ENCODE measurements at regions of chr22 and their contacts with region 1.

Region 1: DNA sequence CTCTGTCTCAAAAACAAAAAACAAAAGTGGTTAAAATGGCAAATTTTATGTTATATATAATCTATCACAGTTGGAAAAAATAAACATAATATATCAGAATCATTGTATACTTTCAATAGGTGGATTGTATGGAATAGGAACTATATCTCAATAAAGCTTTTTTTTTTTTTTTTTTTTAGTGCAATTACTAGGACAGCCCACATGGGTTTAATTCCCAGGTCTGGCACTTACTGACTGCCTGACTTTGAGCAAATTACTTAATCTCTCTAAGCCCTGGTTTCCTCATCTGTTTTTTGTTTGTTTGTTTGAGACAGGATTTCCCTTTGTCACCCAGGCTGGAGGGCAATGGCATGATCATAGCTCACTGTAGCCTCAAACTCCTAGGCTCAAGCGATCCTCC is 26.1 kb upstream of the BAIAP2L2 start:
- DNase-seq: no peak
- H3K4me3 ChIP-seq: no peak overlapping the region
- H3K27ac ChIP-seq: no peak overlapping the region
- H3K4me1 ChIP-seq: peaks cover 7% of the 10 kb centered on the region
- H3K27me3 ChIP-seq: no peaks in the 10 kb centered on the region
- CTCF ChIP-seq: no peak
- POLR2A ChIP-seq: no peak

Region 2: DNA sequence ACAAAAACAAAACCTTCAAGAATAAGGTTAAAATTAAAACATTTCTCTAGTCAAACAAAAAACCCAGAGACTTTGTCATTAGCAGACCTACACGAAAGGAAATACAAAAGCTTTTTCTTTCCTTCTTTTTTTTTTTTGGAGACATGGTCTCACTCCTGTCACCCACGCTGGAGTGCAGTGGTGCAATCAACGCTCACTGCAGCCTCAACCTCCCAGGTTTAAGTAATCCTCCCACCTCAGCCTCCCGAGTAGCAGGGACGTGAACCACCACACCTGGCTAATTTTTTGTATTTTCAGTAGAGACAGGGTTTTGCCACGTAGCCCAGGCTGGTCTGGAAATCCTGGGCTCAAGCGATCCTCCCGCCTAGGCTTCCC is 14.5 kb after region 1 on chr22:
- CTCF ChIA-PET with region 1: interaction called, 12 read pairs
- POLR2A ChIA-PET with region 1: no interaction called
- dilution Hi-C with region 1: no loop called
- intact Hi-C with region 1: no loop called
- DNase-seq: no peak
- H3K4me3 ChIP-seq: no peak overlapping the region
- H3K27ac ChIP-seq: no peak overlapping the region
- H3K4me1 ChIP-seq: peaks cover 3% of the 10 kb centered on the region
- H3K27me3 ChIP-seq: no peaks in the 10 kb centered on the region
- CTCF ChIP-seq: no peak
- POLR2A ChIP-seq: no peak